Lower lobe of right lung (tissue), 2 donors: ENCODE measurements at regions of chr3 and their contacts with region 1.

Region 1: DNA sequence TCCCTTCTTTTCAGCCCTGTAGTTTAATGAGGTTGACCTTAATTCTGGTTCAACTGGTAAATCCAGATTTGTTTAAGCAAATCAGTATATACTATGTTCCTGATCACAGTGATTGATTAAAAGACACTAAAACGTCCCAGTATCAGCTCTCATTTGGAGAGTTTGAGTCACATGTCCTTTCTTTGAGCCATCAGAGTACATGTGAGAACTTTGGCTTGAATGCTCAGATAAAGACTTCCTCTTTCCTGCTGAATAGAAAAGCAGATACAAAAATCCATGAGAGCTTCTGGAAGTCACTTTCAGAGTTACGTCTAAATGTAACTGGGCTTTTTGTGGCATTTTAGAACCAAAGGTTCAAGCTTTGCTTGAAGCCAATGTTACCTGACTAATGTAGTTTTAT is 341.8 kb upstream of the SATB1 start:
- DNase-seq: no peak
- ATAC-seq: no peak
- H3K4me3 ChIP-seq: no peak overlapping the region
- H3K27ac ChIP-seq: no peak overlapping the region
- H3K4me1 ChIP-seq: no peaks in the 10 kb centered on the region
- H3K27me3 ChIP-seq: no peaks in the 10 kb centered on the region
- CTCF ChIP-seq: no peak

Region 2: DNA sequence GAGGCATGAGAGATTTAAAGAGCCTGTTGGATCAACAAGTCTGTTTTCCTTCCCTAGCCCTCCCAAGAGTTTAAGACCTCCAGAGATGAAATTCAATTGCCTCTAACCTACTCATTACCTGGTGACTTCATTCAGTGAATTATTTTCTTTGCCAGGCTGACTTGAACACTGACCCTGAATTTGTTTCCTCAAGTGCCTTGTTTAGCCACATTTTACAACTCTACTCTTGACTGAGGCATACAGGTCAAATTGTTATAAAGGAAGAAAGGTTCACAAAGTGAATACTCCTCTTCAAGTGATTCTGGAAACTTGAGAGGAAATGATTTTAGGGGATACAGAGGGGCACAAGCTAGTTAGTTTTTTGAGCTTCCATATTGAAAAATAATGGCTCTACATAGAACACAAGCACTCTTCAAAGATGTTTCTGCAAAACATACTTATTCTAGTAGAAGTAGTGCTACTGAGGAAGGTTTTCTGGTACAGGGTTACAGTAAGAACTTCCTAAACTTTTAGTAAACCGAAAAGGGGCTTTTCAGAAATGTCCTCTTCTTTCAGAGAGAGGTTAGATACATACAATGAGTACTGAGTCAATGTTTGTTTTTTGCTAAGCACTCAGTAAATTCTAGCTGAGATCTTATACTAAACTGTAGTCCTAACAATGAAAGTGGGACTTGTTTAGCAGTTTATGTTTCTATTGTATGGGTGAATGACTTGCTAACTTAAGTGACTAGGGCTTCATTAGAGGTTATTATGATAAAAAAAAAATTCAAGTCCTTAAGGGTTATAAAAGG is 204.4 kb before region 1 on chr3:
- intact Hi-C with region 1: loop called (anchors 10 kb)
- DNase-seq: no peak
- ATAC-seq: peak in 1 of 2 donors; percentile 52
- H3K4me3 ChIP-seq: no peak overlapping the region
- H3K27ac ChIP-seq: no peak overlapping the region
- H3K4me1 ChIP-seq: peaks cover 5% of the 10 kb centered on the region
- H3K27me3 ChIP-seq: no peaks in the 10 kb centered on the region
- CTCF ChIP-seq: no peak